ENCODE measurements at regions of chr10 and their contacts with region 1.

Region 1: DNA sequence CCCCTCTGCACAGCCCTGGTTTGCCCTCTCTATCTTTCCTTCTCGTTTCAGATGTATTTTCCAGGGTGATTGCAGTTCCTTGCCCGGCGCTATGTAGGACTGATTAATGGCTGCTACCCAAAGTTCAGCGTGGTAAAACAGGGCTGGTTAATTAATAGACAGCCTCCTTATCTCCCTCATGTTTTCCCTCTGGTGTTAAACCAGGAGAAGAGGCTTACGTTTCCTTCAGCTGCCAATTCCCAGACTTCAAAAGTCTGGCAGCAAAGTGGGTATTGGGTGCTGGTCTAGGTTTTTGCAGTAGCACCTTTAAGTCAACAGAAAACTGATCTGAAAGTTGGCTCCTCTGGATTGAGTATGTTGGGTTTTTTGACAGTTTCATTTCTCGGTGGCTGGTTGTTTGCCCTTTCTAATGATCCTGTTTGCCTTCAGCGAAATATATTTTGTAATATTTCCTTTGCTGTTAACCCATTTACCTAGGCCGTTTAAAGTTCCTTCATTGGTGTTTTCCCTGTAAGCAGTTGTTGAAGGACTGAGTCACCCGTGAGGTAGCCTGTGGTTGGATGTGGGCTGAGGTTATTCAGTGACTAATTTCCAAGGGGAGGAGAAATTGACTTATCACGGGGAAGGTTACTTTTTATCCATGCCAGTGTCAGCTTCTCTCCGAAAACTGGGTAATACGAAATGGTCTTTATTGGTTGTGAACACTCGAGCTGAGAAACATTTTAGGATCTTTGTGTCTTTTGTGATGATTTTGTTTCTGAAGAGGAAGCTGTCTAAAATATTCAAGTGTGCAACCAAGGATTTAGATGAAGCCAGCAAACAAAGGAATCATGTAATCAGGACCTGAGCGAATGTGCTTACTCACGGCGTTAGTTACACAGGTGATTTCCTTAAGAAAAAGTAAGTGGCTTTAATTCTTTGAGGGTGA is 257.2 kb downstream of the KIAA1217 start:
- DNase-seq: peak; percentile 62 to 94
- H3K4me3 ChIP-seq: peak overlapping the region; percentile 80
- H3K27ac ChIP-seq: peak overlapping the region; percentile 94
- H3K4me1 ChIP-seq: peaks cover 69% of the 10 kb centered on the region
- H3K27me3 ChIP-seq: no peaks in the 10 kb centered on the region
- CTCF ChIP-seq: no peak

Region 2: DNA sequence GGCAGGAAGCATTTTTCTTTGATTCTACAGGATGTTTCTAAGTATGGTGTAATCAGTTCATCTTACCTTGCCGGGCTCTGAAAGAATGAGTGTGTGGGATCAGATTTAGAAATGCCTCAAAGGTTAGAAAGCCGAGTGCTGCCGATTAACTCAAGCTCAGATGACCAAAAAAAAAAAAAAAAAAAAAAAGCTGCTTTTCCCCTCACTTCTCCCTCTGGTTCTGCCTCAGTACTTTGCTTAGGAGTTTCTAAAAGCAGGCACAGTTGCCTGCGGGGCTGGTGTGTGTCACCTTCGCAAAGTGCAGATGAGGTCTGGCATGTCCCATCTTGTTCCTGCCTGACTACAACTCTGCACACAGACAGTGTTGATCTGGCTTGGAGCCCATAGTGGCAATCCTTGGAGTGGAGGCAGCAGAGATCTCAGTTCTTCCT is 210.3 kb before region 1 on chr10:
- CTCF ChIA-PET with region 1: no interaction called
- POLR2A ChIA-PET with region 1: no interaction called
- intact Hi-C with region 1: loop called (anchors 10 kb)
- DNase-seq: peak; percentile 39 to 60
- H3K4me3 ChIP-seq: peak overlapping the region; percentile 41; the same call in 1 of the 2 replicates
- H3K27ac ChIP-seq: peak overlapping the region; percentile 57
- H3K4me1 ChIP-seq: peaks cover 45% of the 10 kb centered on the region
- H3K27me3 ChIP-seq: no peaks in the 10 kb centered on the region
- CTCF ChIP-seq: no peak

Region 3: DNA sequence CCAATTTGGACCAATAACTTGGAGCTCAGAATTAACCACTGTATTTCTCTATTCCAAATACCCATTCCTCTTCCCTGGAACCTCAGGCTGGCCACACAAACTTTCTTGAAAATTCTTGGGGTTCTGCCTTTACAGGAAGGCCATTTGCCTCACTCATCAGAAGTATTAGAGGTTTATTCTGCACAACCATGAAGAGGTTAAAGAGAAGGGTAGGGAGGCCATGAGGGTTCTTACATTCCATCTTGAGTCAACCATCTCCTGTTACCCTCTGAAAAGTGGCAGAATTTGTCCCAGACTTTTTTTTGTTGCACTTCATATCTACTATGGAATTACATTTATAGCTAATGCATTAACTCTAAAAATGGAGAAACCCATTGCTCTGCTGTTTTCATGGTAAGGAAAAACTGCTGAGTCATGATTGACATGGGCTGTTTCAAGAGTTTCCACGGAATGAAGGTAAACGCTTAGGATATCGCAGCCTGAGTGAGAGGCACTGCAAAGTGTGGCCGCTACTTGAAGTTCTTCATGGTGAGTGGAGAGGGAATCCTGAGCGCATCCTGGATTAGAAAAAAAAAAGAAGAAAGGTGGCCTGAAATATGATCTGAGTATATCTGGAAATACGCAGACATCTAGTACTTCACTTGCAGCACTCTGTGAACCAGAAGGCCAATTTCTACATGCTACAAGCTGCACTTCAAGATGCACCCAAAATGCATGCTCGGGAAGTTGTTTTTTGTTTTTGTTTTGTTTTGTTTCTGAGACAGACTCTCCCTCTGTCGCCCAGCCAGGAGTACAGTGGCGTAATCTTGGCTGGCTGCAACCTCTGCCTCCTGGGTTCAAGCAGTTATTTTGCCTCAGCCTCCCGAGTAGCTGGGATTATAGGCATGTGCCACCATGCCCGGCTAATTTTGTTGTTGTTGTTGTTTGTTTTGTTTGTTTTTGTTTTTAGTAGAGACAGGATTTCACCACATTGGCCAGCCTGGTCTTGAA is 173.6 kb before region 1 on chr10:
- CTCF ChIA-PET with region 1: no interaction called
- POLR2A ChIA-PET with region 1: no interaction called
- intact Hi-C with region 1: no loop called
- DNase-seq: no peak
- H3K4me3 ChIP-seq: no peak overlapping the region
- H3K27ac ChIP-seq: peak overlapping the region; percentile 55
- H3K4me1 ChIP-seq: peaks cover 13% of the 10 kb centered on the region
- H3K27me3 ChIP-seq: no peaks in the 10 kb centered on the region
- CTCF ChIP-seq: no peak

Region 4: DNA sequence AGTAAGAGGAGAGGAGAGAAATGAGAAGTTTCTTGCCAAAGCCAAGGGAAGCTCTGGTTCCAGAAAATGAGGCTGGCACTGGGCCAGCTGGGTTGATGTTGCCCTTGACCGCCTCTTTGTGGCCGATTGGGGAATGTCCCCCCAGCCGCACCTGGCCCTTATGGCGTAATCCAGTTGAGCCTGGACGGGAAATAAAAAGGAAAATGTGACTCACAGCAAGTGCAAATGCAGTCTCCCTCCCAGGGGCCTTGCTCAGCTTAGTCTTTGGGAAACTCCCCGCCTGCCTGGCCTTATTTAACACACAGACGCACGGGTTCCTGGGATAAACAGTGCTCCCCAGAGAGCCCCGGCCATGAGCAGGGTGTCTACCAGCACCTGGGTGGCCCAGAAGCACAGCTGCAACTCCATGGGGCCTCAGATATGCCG is 82.5 kb before region 1 on chr10:
- CTCF ChIA-PET with region 1: no interaction called
- POLR2A ChIA-PET with region 1: no interaction called
- intact Hi-C with region 1: loop called (anchors 2 kb)
- DNase-seq: peak; percentile 83 to 91
- H3K4me3 ChIP-seq: no peak overlapping the region; the same call in 1 of the 2 replicates
- H3K27ac ChIP-seq: peak overlapping the region; percentile 65; the same call in 1 of the 2 replicates
- H3K4me1 ChIP-seq: peaks cover 8% of the 10 kb centered on the region; the same call in 1 of the 2 replicates
- H3K27me3 ChIP-seq: no peaks in the 10 kb centered on the region
- CTCF ChIP-seq: peak; percentile 63

Region 5: GRCh38 chr10:24446739-24447138 is 19.4 kb before region 1 on chr10:
- CTCF ChIA-PET with region 1: no interaction called
- POLR2A ChIA-PET with region 1: no interaction called
- intact Hi-C with region 1: loop called (anchors 2 kb)
- DNase-seq: peak; percentile 46 to 56
- H3K4me3 ChIP-seq: no peak overlapping the region
- H3K27ac ChIP-seq: no peak overlapping the region
- H3K4me1 ChIP-seq: peaks cover 18% of the 10 kb centered on the region; the same call in 1 of the 2 replicates
- H3K27me3 ChIP-seq: no peaks in the 10 kb centered on the region
- CTCF ChIP-seq: no peak

Region 6: DNA sequence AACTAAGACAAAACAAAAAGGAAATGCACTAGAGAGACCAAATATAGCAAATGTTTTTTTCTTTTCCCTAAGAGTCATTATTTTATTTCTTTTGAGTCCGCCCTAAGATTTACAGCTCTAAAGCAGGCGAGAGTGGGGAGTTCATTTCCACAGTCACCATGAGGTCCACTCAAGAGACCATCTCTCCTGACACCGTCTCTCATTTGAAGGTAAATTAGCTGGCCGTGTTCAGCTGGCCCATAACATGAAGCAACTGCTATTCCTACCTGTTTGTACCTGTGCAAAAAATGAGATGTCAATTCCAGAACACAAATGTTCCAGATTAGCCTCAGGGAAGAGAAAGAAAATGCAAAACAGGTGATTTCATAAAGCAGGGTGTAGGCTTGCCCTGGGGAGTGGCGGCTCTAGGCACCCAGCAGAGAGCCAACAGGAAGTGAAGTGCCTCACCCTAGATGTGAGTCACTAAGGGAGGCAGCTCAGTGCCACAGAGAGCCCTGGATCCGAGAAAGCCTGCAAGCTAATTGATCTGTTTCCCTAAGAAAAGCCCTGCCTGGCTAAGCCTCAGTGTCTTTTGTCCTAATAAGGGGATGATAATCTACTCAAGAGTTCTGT is 17.4 kb after region 1 on chr10:
- CTCF ChIA-PET with region 1: no interaction called
- POLR2A ChIA-PET with region 1: no interaction called
- intact Hi-C with region 1: loop called (anchors 1 kb)
- DNase-seq: peak; percentile 85 to 94
- H3K4me3 ChIP-seq: no peak overlapping the region
- H3K27ac ChIP-seq: peak overlapping the region; percentile 58
- H3K4me1 ChIP-seq: peaks cover 31% of the 10 kb centered on the region
- H3K27me3 ChIP-seq: no peaks in the 10 kb centered on the region
- CTCF ChIP-seq: no peak

Measured in PC-9 (cell line).